Spleen (tissue), 13 donors: ENCODE measurements at regions of chr15 and their contacts with region 1.

Region 1: DNA sequence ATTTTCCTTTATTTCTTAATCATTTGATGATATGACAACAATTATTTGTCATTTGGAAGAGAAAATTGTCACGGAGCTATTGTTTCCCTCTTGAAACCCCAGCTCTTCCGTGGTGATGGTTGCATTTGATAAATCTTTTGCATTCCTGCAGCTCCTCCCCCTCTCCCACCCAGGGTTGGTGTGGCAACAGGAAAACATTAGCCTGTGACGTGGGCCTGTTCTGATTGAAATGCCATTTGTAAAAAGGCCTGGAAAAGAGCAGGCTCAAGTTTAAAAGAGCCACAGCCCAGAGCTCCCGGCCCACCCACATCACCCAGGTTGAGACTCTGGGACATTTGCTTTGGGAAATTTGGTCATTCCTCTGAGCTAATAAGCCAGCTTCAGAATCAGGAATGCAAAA is 282.5 kb downstream of the RPLP1 start:
- DNase-seq: no peak
- H3K4me3 ChIP-seq: no peak overlapping the region
- H3K27ac ChIP-seq: no peak overlapping the region
- H3K4me1 ChIP-seq: peaks cover 0 to 3% (median 0%) of the 10 kb centered on the region in 6 donors
- H3K27me3 ChIP-seq: peaks cover 0 to 5% (median 0%) of the 10 kb centered on the region in 7 donors
- CTCF ChIP-seq: no peak
- POLR2A ChIP-seq: no peak

Region 2: GRCh38 chr15:67865331-67865730 is 1869.8 kb before region 1 on chr15:
- intact Hi-C with region 1: no loop called
- DNase-seq: no peak
- H3K4me3 ChIP-seq: no peak overlapping the region
- H3K27ac ChIP-seq: no peak overlapping the region
- H3K4me1 ChIP-seq: peaks cover 9 to 17% (median 15%) of the 10 kb centered on the region in 6 donors
- H3K27me3 ChIP-seq: peaks cover 0 to 5% (median 0%) of the 10 kb centered on the region in 7 donors
- CTCF ChIP-seq: no peak
- POLR2A ChIP-seq: no peak

Region 3: DNA sequence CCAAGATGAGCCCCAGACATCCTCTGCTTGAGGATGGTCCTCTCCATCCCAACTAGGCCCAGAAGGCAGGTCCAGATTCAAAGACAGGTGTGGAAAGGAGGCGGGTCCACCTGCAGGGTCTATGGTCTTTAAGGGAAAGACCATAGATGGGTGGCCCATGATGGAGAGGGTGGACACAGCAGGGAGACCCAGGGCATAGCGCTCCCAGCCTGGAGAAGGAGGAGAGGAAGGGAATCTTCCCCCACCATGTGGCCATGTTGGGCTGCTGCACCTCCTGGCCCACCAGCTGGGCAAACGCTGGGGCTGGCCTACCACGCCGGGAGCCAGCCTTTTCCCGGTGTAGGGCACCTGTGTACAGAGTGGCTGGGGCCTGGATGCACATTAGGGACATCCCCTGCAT is 627.8 kb after region 1 on chr15:
- intact Hi-C with region 1: loop called (anchors 10 kb)
- DNase-seq: peak; percentile 65
- H3K4me3 ChIP-seq: no peak overlapping the region
- H3K27ac ChIP-seq: no peak overlapping the region
- H3K4me1 ChIP-seq: no peaks in the 10 kb centered on the region
- H3K27me3 ChIP-seq: peaks cover 0 to 14% (median 0%) of the 10 kb centered on the region in 7 donors
- CTCF ChIP-seq: peak; percentile 21 to 78 (median 60)
- POLR2A ChIP-seq: no peak

Region 4: GRCh38 chr15:70466895-70467529 is 731.9 kb after region 1 on chr15:
- intact Hi-C with region 1: loop called (anchors 10 kb)
- DNase-seq: peak; percentile 81
- H3K4me3 ChIP-seq: no peak overlapping the region
- H3K27ac ChIP-seq: no peak overlapping the region
- H3K4me1 ChIP-seq: peaks cover 0 to 20% (median 6%) of the 10 kb centered on the region in 6 donors
- H3K27me3 ChIP-seq: peaks cover 0 to 28% (median 0%) of the 10 kb centered on the region in 7 donors
- CTCF ChIP-seq: peak; percentile 41 to 73 (median 51)
- POLR2A ChIP-seq: no peak